ENCODE measurements at regions of chr9 and their contacts with region 1.

Region 1: DNA sequence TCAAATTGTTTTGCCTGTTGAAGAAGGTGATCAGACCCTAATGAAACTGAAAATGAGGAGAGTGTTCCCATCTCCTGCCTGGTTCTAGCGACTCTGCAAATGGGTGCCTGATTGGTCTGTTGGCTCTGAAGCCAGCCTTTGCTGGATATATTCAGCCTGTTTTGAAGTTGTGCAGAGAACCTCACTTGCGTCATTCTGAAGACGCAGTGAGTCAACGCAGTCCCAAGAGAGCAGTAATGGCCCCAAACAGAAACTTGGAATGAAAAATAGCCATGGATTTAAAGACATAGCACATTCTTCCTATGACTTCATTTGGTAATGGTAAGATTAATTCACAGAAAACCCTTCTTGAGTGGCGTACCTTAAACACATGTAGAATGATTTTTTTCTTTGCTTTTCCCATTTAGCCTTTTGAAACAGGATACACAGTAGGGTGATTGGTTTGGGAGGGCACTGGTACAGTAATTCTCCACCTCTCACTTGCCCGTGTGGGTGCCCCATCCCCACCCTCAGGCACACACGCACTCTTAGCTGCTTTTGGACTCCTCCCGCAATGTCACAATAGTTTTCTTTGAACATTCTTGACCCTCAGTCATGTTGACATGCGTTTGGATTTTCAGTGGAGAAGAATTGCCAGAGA is 54.1 kb upstream of the ABL1 start:
- DNase-seq: peak in 1 of 4 experiments; percentile 42
- ATAC-seq: peak; percentile 18
- H3K4me3 ChIP-seq: no peak overlapping the region
- H3K27ac ChIP-seq: no peak overlapping the region
- H3K4me1 ChIP-seq: peaks cover 0 to 6% of the 10 kb centered on the region in 2 experiments; a peak in 2 of 5 replicates
- H3K27me3 ChIP-seq: no peaks in the 10 kb centered on the region
- CTCF ChIP-seq: no peak
- EP300 ChIP-seq: no peak
- POLR2A ChIP-seq: no peak
- RAD21 ChIP-seq: no peak

Region 2: DNA sequence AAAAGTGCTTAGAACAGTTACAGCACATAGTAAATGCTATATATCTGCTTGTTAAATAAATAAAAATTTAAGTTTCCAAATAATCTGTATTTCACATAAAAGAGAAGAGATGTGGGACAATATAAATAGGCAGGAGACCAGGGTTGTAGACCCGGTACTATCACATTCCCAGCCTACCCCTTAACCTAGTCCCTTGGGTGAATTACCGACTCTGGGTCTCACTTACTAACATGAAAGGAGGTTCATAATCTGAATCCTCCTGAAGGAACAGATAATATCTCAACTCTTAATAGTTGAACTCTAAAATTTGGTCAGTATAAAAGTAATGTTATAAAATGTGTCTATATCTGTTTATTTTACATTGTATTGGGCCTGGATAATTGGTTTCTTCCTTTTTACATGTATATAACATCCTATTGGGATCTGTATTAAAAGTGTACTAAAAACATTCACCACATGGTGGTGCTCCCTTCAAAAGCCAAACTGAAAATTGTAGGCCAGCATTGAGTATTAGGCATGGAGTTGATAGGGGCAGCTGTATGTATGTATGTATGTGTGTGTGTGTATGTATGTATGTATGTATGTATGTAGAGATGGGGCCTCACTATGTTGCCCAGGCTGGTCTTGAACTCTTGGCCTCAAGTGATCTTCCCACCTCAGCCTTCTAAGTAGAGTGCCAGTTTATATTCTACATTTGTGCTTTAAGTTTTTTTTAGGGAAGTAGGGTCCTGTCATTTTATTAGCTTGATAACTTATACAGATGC is 10.1 kb before region 1 on chr9:
- CTCF ChIA-PET with region 1: interaction called, 3 read pairs
- POLR2A ChIA-PET with region 1: interaction called, 42 read pairs
- in situ Hi-C with region 1: no loop called
- intact Hi-C with region 1: no loop called
- DNase-seq: peak; percentile 91 to 98 (median 95)
- ATAC-seq: peak; percentile 89
- H3K4me3 ChIP-seq: no peak overlapping the region
- H3K27ac ChIP-seq: no peak overlapping the region
- H3K4me1 ChIP-seq: peaks cover 6 to 8% of the 10 kb centered on the region in 2 experiments; a peak in 4 of 5 replicates
- H3K27me3 ChIP-seq: no peaks in the 10 kb centered on the region
- CTCF ChIP-seq: no peak
- EP300 ChIP-seq: no peak
- POLR2A ChIP-seq: no peak
- RAD21 ChIP-seq: no peak

Region 3: GRCh38 chr9:130794923-130795495 is 14.0 kb after region 1 on chr9:
- CTCF ChIA-PET with region 1: no interaction called
- POLR2A ChIA-PET with region 1: interaction called, 28 read pairs
- in situ Hi-C with region 1: no loop called
- intact Hi-C with region 1: no loop called
- DNase-seq: no peak
- ATAC-seq: no peak
- H3K4me3 ChIP-seq: no peak overlapping the region
- H3K27ac ChIP-seq: no peak overlapping the region
- H3K4me1 ChIP-seq: no peaks in the 10 kb centered on the region
- H3K27me3 ChIP-seq: no peaks in the 10 kb centered on the region
- CTCF ChIP-seq: no peak
- EP300 ChIP-seq: no peak
- POLR2A ChIP-seq: no peak
- RAD21 ChIP-seq: no peak

Measured in K562 (cell line).